HEK293T (cell line): ENCODE measurements at regions of chr20 and their contacts with region 1.

Region 1: DNA sequence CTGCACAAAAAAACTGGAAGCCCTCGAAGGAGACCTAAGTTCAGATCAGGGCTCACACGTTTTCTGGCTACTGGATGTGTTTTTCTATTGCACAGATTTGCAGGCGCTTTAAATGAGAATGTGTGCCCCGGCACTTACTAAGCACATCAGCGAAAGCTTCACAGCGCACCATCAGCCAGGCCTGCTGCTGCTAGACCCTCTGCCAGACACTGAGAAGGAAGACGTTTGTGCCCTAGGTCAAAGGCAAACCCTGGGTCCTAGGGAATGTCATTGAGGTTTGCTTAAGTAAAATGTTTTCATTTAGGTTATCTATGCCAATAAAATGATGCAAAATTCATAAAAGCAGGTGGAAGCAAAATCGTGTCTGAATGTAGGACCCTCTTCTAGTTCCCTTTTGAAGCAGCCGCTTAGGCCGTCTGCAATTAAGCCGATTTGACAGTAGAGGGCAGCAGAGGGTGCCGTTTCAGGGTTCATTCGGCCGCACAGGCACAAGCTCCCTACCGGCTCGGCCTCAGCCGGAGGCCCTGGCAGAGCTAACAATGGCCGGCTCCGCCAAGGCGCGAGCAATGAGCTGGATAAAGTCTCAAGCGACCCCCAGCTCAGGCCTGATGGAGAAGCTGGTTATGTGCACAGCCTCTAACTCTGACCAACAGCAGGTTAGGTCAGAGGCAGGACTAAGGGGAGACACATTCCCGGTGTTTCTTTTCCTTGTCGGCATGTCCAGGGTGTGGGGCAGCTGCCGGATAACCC is 107.2 kb upstream of the FOXA2 start:
- DNase-seq: peak; percentile 80

Region 2: GRCh38 chr20:22333885-22334545 is 357.5 kb before region 1 on chr20:
- CTCF ChIA-PET with region 1: interaction called, 10 read pairs
- POLR2A ChIA-PET with region 1: no interaction called
- DNase-seq: peak; percentile 68

Region 3: DNA sequence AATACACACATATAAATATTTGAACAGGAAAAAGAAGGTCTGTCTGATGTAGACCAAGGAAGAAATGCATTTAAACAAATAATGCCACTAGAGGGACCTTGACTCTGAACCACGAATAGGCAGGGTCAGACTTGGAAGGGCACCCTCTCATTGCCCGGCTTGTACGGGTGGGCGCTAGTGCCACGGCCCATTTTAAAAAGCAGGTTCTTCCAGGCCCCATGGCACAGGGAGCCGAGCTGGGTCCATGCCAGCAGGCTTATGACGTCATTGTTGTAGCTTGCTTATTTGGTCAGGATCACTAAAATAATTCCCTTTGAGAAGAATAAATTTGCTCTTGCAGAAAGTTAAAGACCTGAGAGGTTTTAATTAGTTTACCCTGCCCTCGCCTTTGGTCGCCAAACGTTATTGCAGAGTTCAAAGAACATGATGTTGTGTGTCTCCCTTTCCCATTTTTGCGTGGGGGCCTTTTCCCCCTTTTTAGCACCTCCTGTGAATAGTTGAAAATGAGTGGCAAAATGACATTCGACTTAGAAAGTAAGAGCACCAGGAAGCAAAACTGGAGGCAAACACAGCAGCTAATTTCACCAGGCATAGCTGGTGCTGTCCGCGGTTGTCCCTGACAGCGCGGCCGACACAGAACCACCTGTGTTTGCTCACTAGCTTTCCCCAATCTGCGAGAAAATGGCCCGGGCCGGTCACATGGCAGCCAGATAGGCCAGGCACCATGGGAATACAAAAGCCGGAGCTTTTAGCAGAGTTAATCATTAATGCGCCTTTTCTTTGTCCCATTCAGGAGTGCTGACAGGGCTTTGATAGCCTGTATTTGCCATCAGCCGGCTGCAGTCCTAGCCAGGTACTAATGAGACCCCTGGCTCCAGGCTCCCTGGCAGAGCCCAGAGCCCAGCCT is 201.0 kb before region 1 on chr20:
- CTCF ChIA-PET with region 1: no interaction called
- POLR2A ChIA-PET with region 1: no interaction called
- DNase-seq: no peak

Region 4: GRCh38 chr20:22974353-22974752 is 282.8 kb after region 1 on chr20:
- CTCF ChIA-PET with region 1: interaction called, 15 read pairs
- POLR2A ChIA-PET with region 1: no interaction called
- DNase-seq: peak; percentile 31

Region 5: GRCh38 chr20:23340524-23340923 is 649.0 kb after region 1 on chr20:
- CTCF ChIA-PET with region 1: interaction called, 24 read pairs
- POLR2A ChIA-PET with region 1: interaction called, 6 read pairs
- DNase-seq: peak; percentile 64